HepG2 (cell line): ENCODE measurements at regions of chr17 and their contacts with region 1.

Region 1: GRCh38 chr17:68457539-68458259 is 403 bp upstream of the WIPI1 start:
- DNase-seq: peak; percentile 98
- ATAC-seq: peak; percentile 87
- H3K4me3 ChIP-seq: peak overlapping the region; percentile 56 to 70 (median 60)
- H3K27ac ChIP-seq: peak overlapping the region; percentile 58
- H3K4me1 ChIP-seq: peaks cover 77% of the 10 kb centered on the region
- H3K27me3 ChIP-seq: no peaks in the 10 kb centered on the region
- CTCF ChIP-seq: peak; percentile 25; the same call in 1 of the 2 replicates
- EP300 ChIP-seq: no peak; a peak in 2 of 4 replicates
- POLR2A ChIP-seq: peak; percentile 62 to 82
- RAD21 ChIP-seq: peak; percentile 35; the same call in 1 of the 2 replicates

Region 2: GRCh38 chr17:67974598-67975066 is 483.1 kb before region 1 on chr17:
- CTCF ChIA-PET with region 1: no interaction called
- POLR2A ChIA-PET with region 1: no interaction called
- in situ Hi-C with region 1: loop called (anchors 10 kb)
- intact Hi-C with region 1: no loop called
- DNase-seq: no peak
- ATAC-seq: no peak; the same call in 2 of the 3 replicates
- H3K4me3 ChIP-seq: no peak overlapping the region
- H3K27ac ChIP-seq: no peak overlapping the region
- H3K4me1 ChIP-seq: peaks cover 7% of the 10 kb centered on the region; the same call in 1 of the 2 replicates
- H3K27me3 ChIP-seq: no peaks in the 10 kb centered on the region
- CTCF ChIP-seq: no peak
- EP300 ChIP-seq: no peak
- POLR2A ChIP-seq: no peak
- RAD21 ChIP-seq: no peak

Region 3: DNA sequence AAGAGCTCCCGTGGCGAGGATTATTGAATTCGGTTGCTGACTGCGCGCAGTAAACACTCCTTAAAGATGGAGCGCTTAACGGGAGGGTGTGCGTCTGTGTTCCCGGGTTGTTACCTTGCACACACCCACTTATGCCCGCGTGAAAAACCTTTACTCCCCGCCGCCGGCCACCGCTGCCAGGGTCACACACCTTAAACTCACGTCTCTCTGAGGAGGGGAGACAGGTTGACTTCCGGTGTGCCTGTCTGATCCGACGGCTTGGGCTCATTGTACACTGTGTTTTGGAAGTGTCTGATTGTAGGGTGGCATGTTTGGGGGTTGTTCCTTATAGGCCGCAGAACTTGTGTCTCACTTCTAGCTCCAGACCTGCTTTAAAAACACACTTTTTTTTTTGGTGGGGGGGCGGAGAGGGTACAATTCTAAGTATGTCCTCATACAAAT is 355.4 kb before region 1 on chr17:
- CTCF ChIA-PET with region 1: no interaction called
- POLR2A ChIA-PET with region 1: no interaction called
- in situ Hi-C with region 1: no loop called
- intact Hi-C with region 1: loop called (anchors 2 kb)
- DNase-seq: no peak
- ATAC-seq: peak; percentile 31
- H3K4me3 ChIP-seq: peak overlapping the region; percentile 79 to 83 (median 82)
- H3K27ac ChIP-seq: peak overlapping the region; percentile 72
- H3K4me1 ChIP-seq: peaks cover 35% of the 10 kb centered on the region
- H3K27me3 ChIP-seq: no peaks in the 10 kb centered on the region; a peak in 1 of 5 replicates
- CTCF ChIP-seq: no peak
- EP300 ChIP-seq: no peak
- POLR2A ChIP-seq: no peak
- RAD21 ChIP-seq: no peak

Region 4: GRCh38 chr17:68205251-68205807 is 252.4 kb before region 1 on chr17:
- CTCF ChIA-PET with region 1: interaction called, 3 read pairs
- POLR2A ChIA-PET with region 1: interaction called, 3 read pairs
- in situ Hi-C with region 1: no loop called
- intact Hi-C with region 1: loop called (anchors 2 kb)
- DNase-seq: peak; percentile 80
- ATAC-seq: peak; percentile 88
- H3K4me3 ChIP-seq: peak overlapping the region; percentile 68 to 85 (median 84); a peak in 5 of 6 replicates
- H3K27ac ChIP-seq: peak overlapping the region; percentile 22
- H3K4me1 ChIP-seq: peaks cover 35% of the 10 kb centered on the region
- H3K27me3 ChIP-seq: peaks cover 0 to 27% of the 10 kb centered on the region in 2 experiments; a peak in 4 of 5 replicates
- CTCF ChIP-seq: peak; percentile 95
- EP300 ChIP-seq: 0 out of 4 replicates have a peak, but pooled peaks have one; percentile 5 to 14
- POLR2A ChIP-seq: peak in 1 of 2 experiments; percentile 64; a peak in 3 of 4 replicates
- RAD21 ChIP-seq: peak; percentile 89

Region 5: GRCh38 chr17:68260051-68260762 is 197.5 kb before region 1 on chr17:
- CTCF ChIA-PET with region 1: interaction called, 14 read pairs
- POLR2A ChIA-PET with region 1: interaction called, 8 read pairs
- in situ Hi-C with region 1: no loop called
- intact Hi-C with region 1: no loop called
- DNase-seq: no peak
- ATAC-seq: no peak
- H3K4me3 ChIP-seq: no peak overlapping the region
- H3K27ac ChIP-seq: no peak overlapping the region
- H3K4me1 ChIP-seq: peaks cover 31% of the 10 kb centered on the region
- H3K27me3 ChIP-seq: no peaks in the 10 kb centered on the region
- CTCF ChIP-seq: no peak
- EP300 ChIP-seq: no peak
- POLR2A ChIP-seq: no peak
- RAD21 ChIP-seq: no peak

Region 6: DNA sequence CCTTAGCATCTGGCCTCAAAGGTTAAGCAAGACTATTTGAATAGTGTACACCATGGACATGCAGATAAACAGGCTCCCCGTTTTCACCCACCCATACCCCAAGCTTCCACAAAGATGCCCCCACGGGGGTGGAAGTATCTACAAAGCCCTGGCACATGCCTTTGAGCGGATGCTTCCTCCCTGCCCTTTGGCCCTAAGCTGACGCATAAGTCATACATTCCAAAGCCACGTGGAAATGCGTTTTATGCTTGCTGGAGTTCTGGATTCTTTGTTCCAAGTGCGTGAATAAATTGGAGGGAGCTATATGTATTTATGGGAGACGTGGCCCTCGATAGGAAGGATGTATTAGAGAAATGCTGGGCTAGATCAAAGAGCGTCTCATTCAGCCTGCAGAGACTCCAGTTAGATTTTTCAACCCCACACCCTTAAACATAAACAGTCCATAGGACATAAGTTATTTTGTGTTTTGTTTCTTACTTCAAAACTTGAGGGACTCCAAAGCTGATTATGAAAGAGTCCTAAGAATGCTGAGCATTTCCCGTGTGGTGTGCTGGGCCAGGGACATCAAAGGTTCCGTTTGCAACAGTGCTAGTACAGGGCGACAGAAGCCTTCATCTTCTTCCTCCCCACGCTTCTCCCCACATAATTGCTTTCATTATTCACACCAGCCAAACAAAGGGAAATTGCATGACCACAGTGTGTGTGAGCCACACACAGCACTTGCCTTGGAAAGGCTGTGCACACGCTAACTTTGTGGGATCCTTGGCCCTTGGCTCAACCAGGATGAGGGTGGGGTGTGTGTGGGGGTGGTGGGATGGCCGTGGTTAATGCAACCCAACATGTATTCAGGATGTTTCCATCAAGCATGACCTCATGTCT is 74.0 kb before region 1 on chr17:
- CTCF ChIA-PET with region 1: no interaction called
- POLR2A ChIA-PET with region 1: interaction called, 13 read pairs
- in situ Hi-C with region 1: no loop called
- intact Hi-C with region 1: loop called (anchors 2 kb)
- DNase-seq: peak; percentile 99
- ATAC-seq: peak; percentile 74
- H3K4me3 ChIP-seq: no peak overlapping the region
- H3K27ac ChIP-seq: peak overlapping the region; percentile 97
- H3K4me1 ChIP-seq: peaks cover 100% of the 10 kb centered on the region
- H3K27me3 ChIP-seq: no peaks in the 10 kb centered on the region
- CTCF ChIP-seq: peak; percentile 18; the same call in 1 of the 2 replicates
- EP300 ChIP-seq: peak; percentile 84 to 98
- POLR2A ChIP-seq: peak in 1 of 2 experiments; percentile 63; a peak in 3 of 4 replicates
- RAD21 ChIP-seq: peak; percentile 41

Region 7: DNA sequence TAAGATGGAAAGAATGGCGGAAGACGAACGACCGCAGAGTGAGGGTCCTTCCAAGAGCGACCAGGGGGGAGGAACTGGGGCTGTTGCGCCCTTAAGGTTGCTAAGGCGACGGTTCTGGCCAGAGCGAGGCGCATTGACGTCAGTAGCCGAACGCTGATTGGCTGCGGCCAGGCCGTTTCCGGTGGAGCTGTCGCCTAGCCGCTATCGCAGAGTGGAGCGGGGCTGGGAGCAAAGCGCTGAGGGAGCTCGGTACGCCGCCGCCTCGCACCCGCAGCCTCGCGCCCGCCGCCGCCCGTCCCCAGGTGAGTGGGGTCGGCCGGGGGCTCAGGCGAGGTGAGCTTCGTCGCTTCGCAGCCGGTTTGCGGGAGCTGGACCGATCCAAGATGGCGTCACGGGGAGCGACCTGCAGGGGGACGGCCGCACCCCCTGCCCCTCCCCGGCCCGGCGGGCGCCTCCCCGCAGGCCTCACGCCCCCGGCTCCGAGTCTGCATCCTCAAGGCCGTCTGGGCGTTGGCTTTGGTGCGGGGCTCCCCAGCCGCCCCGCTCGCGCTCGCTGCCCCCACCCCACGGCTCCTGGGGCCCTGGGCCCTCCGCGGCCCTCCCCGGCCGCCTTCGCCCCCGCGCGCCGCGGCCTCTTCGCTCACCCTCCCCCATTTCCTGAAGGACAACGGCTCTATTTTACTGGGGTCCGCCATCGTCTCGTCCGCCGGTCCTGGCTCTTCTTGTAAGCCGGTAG is 54.7 kb after region 1 on chr17 and contains the start of gene PRKAR1A:
- CTCF ChIA-PET with region 1: no interaction called
- POLR2A ChIA-PET with region 1: interaction called, 18 read pairs
- in situ Hi-C with region 1: no loop called
- intact Hi-C with region 1: no loop called
- DNase-seq: peak; percentile 92
- ATAC-seq: peak; percentile 88
- H3K4me3 ChIP-seq: peak within 1 kb of the TSS; percentile 91 to 95 (median 91)
- H3K27ac ChIP-seq: peak within 1 kb of the TSS; percentile 91
- H3K4me1 ChIP-seq: peaks cover 75% of the 10 kb centered on the region
- H3K27me3 ChIP-seq: no peaks in the 10 kb centered on the region; a peak in 1 of 5 replicates
- CTCF ChIP-seq: peak; percentile 4; the same call in 1 of the 2 replicates
- EP300 ChIP-seq: 0 out of 4 replicates have a peak, but pooled peaks of 1 of the 2 experiments have one; percentile 19
- POLR2A ChIP-seq: peak; percentile 82 to 86
- RAD21 ChIP-seq: peak; percentile 61; the same call in 1 of the 2 replicates
- total RNA-seq, gene PRKAR1A: 266 and 335 TPM in 2 replicates